ENCODE measurements at regions of chr4 and their contacts with region 1.

Region 1: DNA sequence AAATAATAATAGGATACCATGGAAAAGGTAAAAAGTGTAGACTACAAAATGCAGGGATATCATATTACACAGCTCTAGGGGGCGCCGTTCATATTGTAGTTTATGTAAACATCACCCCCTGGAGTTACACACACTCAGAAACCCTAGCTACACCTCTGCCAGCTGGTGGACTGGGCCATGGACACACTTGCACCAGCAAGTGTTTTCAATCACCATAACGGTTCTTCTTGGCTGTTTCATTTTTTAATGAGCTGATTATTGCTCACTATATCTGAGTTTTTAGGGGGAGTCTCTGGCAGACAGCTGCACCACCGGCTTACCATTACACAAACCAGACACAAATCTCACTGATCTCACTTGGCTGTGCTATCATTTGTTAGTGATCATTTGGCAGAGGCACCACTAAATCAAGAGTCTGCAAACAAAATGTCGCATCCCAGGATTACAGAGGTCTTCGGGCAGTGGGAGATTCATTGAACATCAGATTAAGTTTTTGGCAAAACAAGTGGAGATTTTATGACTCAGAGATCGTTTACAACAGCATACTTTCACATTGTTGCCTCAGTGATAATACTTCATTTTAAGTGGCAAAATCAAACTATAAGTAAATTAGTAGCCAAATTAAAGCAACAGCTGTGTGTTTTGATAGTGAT is 185.7 kb downstream of the UNC5C start:
- DNase-seq: peak in 29 of 42 donors; percentile 14 to 81 (median 47)

Region 2: DNA sequence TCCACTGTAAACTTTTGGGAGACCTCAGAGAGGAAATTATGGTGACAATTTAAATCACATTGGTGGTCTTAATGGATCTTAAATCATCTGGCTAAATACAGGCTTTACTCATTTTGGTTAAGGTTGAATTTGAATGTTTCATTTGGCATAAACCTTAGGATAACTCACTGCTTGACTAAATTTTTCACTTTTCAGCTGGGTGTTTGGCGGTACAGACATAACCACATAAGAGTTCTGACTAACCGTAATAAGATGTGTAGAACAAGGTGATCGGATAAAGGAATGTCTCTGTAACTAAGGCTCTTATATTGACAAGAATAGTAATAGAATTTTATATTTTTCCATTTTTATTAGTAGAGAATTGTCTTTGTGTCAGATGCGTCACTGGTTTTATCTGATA is 324.2 kb before region 1 on chr4:
- intact Hi-C with region 1: no loop called
- DNase-seq: no peak

Region 3: DNA sequence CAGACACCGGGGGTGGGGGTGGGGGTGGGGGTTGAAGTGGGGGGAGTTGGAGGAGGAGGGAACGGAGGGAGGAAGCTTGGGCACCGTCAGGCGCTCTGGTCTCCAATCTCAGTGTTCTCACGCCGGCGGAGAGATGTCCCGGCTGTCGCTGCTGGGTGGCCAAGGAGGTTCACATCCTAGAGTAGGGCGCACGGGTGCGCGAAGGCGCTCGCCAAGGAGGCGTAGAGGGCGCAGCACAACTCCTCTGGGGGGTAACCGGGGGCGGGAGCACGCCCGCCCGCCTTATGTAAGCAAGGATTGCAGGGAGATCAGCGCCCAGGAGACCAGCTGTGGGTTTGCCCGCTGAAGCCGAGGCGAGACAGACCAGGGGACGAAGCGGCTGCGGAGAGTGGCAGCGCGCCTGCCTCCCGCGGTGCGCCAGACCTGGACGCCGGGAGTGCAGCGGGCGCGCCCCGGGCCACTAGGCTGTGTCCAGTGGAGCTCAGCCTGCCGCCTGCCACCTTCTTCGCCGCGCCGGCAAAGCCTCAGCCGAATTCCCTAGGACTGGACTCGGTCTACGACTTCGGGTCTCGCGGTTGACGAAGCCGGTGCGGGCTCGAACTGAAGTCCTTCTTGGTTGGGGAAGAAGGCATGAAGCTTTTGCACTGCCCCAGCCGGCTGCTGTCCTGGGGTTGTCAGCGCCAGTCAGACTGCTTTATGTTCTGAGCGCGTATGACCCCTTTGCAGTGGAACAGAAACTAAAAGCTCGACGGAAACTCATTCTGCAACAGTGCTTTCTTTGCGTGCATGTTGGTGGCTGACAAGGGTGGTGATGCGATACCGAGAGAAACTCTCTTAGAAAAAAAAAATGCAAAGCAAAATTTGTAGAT is 186.4 kb after region 1 on chr4:
- intact Hi-C with region 1: loop called (anchors 5 kb)
- DNase-seq: peak; percentile 54 to 92 (median 82)